Esophagus squamous epithelium (tissue), 5 donors: ENCODE measurements at regions of chr4 and their contacts with region 1.

Region 1: GRCh38 chr4:20773144-20773997 is 73.1 kb downstream of the PACRGL start:
- DNase-seq: no peak
- H3K4me3 ChIP-seq: peak overlapping the region in 1 of 4 donors; percentile 21
- H3K27ac ChIP-seq: no peak overlapping the region
- H3K4me1 ChIP-seq: peaks cover 0 to 8% (median 0%) of the 10 kb centered on the region in 3 donors
- H3K27me3 ChIP-seq: no peaks in the 10 kb centered on the region
- CTCF ChIP-seq: peak in 5 of 6 experiments; percentile 46 to 69 (median 61)
- POLR2A ChIP-seq: no peak

Region 2: DNA sequence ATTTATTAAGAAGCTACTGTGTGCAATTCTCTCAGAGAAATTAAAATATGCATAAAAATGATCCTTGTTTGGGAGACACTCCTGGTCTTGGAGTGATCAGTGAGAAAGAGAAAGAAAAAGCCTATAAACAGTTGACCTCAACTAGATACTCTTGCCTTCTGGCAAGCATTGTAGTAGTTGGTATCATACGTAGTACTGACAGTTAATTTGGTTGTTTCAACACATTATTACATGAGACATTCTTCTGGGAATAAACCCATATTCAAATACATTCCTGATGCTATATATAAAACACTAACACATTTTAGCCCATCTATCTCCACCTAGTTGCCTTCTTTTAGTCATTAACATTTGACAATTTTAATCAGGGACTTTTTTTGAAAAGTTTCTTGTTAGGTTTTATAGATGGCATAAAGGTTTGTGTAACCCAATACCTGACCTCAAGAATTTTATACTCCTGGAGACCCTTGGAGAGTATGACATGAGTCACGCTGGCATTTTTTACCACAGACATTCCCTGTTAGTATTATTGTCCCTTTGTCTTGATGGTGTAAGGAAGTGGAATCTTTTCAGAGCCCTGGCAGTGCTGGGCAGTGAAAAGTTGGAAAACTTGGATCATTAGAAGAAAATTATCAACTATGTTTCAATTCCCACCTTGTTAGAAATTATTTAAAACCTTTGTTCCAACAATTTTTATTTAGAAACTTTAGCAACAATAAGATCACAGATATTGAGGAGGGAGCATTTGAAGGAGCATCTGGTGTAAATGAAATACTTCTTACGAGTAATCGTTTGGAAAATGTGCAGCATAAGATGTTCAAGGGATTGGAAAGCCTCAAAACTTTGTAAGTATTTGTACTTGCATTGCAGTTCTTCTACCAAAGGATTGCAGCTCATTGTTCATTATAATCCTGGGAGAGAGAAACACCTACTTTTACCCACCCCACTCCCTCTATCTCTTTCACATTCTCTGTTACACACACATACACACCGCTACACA is 240.2 kb before region 1 on chr4:
- intact Hi-C with region 1: no loop called
- DNase-seq: no peak
- H3K4me3 ChIP-seq: no peak overlapping the region
- H3K27ac ChIP-seq: no peak overlapping the region
- H3K4me1 ChIP-seq: no peaks in the 10 kb centered on the region
- H3K27me3 ChIP-seq: no peaks in the 10 kb centered on the region
- CTCF ChIP-seq: no peak
- POLR2A ChIP-seq: no peak

Region 3: DNA sequence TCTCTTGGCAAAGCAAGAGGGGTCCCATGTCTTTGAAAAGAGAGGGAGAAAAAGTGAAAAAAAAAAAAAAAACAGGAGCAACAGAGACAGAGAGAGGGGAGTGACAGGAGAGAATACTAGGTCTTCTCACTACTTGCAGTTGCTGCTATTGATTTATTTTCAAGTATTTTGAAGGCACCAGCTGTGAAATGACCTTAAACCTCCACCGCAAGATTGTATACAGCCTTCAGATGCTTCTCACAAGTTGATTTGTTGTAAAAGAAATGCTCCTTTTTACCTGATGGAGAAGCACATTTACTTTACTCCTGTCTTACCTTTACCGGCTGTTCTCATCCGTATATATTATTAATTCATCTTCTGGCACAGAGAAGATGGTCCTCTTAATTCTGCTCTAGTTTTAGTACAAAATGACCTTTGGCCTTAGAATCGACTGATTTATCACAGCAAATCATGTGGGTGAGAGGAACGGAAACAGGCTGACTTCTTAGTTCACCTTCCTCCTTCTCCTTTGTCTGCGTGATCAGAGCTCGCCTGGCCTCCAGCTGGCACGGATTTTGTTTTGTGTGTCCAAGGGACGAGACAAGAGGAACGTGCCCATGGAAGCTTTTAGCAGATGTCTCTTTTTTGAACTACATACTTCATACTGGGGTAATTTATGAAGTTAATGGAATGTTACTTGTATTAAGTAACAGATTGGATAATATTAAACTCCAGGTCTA is 155.5 kb before region 1 on chr4:
- intact Hi-C with region 1: no loop called
- DNase-seq: no peak
- H3K4me3 ChIP-seq: no peak overlapping the region
- H3K27ac ChIP-seq: peak overlapping the region in 1 of 4 donors; percentile 6
- H3K4me1 ChIP-seq: peaks cover 0 to 9% (median 0%) of the 10 kb centered on the region in 3 donors
- H3K27me3 ChIP-seq: no peaks in the 10 kb centered on the region
- CTCF ChIP-seq: no peak
- POLR2A ChIP-seq: no peak

Region 4: GRCh38 chr4:21134994-21135393 is 361.6 kb after region 1 on chr4:
- intact Hi-C with region 1: loop called (anchors 10 kb)
- DNase-seq: no peak
- H3K4me3 ChIP-seq: no peak overlapping the region
- H3K27ac ChIP-seq: no peak overlapping the region
- H3K4me1 ChIP-seq: no peaks in the 10 kb centered on the region
- H3K27me3 ChIP-seq: no peaks in the 10 kb centered on the region
- CTCF ChIP-seq: peak in 1 of 6 experiments; percentile 21
- POLR2A ChIP-seq: no peak